Lower leg skin (tissue), 4 donors: ENCODE measurements at regions of chr1 and their contacts with region 1.

Region 1: DNA sequence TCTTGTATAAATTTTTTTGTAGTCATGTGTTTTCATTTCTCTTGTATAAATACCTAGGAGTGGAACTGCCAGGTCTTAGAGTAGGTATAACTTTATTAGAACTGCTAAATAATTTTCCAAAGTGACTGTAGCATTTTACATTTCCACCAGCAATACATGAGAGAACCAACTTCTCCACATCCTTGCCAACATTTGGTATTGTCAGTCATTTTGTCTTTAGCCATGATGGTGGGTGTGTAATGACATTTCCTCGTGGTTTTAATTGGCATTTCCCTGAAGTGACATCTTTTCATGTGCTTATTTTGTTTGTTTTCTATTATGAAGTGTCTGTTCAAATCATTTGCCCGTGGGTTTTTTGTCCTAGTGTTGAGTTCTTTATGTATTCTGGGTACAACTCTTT is 29.7 kb downstream of the ZBTB8A start:
- DNase-seq: no peak
- H3K4me3 ChIP-seq: no peak overlapping the region
- CTCF ChIP-seq: no peak
- POLR2A ChIP-seq: no peak

Region 2: GRCh38 chr1:32426489-32427255 is 142.3 kb before region 1 on chr1:
- intact Hi-C with region 1: no loop called
- DNase-seq: no peak
- H3K4me3 ChIP-seq: no peak overlapping the region
- CTCF ChIP-seq: no peak
- POLR2A ChIP-seq: no peak

Region 3: DNA sequence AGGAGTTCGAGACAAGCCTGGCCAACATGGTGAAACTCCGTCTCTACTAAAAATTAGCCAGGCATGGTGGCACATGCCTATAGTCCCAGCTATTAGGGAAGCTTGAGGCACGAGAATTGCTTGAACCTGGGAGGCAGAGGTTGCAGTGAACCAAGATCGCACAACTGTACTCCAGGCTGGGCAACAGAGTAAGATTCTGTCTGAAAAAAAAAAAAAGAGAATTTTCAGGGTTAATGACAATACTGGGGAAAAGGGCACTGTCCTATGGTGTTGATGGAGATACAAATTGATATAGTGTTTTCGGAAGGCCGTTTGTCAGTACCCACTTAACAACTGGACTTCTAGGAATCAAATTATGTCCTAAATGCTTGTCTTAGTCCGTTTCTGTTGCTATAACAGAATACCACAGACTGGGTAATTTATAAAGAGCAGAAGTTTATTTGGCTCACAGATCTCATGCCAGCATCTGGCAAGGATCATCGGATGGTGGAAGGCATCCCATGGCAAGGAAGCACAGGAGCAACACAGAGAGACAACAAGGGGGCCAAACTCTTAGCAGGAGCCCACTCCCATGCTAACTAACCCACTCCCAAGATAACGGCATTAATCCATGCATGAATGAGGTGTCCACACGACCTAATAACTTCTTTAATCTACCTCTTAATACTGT is 11.6 kb after region 1 on chr1:
- intact Hi-C with region 1: loop called (anchors 1 kb)
- DNase-seq: peak in 1 of 2 donors; percentile 21
- H3K4me3 ChIP-seq: no peak overlapping the region
- CTCF ChIP-seq: no peak
- POLR2A ChIP-seq: no peak

Region 4: DNA sequence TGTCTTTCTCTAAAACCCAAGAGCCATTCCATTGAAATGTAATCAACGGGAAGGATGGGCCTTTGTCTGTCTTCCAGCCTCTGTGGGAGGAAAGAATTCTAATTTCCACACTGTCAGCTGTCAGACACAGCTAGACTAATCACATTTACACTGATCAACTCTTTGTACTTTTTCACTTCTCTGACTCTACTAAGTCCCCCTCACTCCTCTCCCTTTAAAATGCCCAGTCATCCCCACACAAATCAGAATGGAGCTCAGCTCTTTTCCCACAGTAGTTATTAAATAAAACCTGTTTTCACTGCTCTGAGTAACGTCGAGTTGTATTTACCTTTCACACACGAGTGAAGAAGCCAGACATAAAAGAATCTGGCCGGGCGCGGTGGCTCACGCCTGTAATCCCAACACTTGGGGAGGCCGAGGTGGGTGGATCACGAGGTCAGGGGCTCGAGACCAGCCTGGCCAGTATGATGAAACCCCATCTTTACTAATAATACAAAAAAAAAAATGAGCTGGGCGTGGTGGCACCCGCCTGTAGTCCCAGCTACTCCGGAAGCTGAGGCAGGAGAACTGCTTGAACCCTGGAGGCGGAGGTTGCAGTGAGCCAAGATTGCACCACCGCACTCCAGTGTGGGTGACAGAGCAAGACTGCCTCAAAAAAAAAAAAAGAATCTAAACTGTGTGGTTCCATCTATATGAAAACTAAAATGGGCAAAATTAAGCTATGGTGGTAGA is 68.2 kb after region 1 on chr1:
- intact Hi-C with region 1: loop called (anchors 1 kb)
- DNase-seq: no peak
- H3K4me3 ChIP-seq: no peak overlapping the region
- CTCF ChIP-seq: no peak
- POLR2A ChIP-seq: no peak